PC-3 (cell line): ENCODE measurements at regions of chr4 and their contacts with region 1.

Region 1: GRCh38 chr4:71270901-71271300 is 67.9 kb upstream of the SLC4A4 start:
- DNase-seq: peak; percentile 73
- ATAC-seq: peak; percentile 91
- H3K4me3 ChIP-seq: no peak overlapping the region
- H3K27ac ChIP-seq: no peak overlapping the region
- H3K4me1 ChIP-seq: no peaks in the 10 kb centered on the region; the same call in 1 of the 2 replicates
- H3K27me3 ChIP-seq: no peaks in the 10 kb centered on the region
- CTCF ChIP-seq: peak; percentile 81

Region 2: GRCh38 chr4:71050809-71051208 is 220.1 kb before region 1 on chr4:
- CTCF ChIA-PET with region 1: no interaction called
- POLR2A ChIA-PET with region 1: no interaction called
- intact Hi-C with region 1: loop called (anchors 5 kb)
- DNase-seq: peak; percentile 43
- ATAC-seq: peak; percentile 64; the same call in 1 of the 2 replicates
- H3K4me3 ChIP-seq: no peak overlapping the region
- H3K27ac ChIP-seq: no peak overlapping the region
- H3K4me1 ChIP-seq: no peaks in the 10 kb centered on the region
- H3K27me3 ChIP-seq: no peaks in the 10 kb centered on the region
- CTCF ChIP-seq: peak; percentile 29; the same call in 1 of the 2 replicates

Region 3: DNA sequence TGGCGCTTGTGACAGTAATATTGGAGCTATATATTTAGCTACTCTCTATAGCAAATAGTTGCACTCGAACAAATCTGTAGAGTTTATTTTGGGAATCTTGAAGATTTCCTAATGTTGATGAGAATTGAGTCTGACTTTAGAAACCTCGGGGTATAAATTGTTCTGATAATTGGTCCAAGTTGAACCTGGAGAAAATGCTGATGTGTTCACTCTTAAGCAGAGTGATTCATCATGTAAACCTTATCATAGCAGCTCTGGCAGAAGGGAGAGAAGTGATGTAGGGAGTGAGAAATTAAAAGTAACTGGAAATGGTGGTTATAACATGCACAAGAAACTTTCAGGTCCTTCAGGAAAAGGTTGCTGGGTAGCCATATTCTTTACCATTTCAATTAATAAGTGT is 51.5 kb after region 1 on chr4:
- CTCF ChIA-PET with region 1: no interaction called
- POLR2A ChIA-PET with region 1: no interaction called
- intact Hi-C with region 1: no loop called
- DNase-seq: no peak
- ATAC-seq: no peak
- H3K4me3 ChIP-seq: no peak overlapping the region
- H3K27ac ChIP-seq: no peak overlapping the region
- H3K4me1 ChIP-seq: no peaks in the 10 kb centered on the region
- H3K27me3 ChIP-seq: no peaks in the 10 kb centered on the region
- CTCF ChIP-seq: no peak

Region 4: DNA sequence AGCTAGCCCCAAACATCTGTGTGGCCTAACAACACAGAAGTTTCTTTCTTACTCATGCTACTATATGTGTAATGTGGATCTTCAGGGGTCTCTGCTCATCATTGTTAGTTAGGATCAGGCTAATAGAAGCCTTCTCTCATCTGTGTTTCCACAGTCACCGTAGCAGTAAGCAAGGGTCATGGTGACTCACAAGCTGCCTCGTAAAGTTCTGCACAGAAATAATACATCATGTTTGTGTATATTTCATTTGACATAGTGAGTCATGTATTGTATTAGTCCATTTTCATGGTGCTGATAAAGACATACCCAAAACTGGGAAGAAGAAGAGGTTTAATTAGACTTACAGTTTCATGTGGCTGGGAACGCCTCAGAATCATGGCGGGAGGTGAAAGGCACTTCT is 106.7 kb after region 1 on chr4:
- CTCF ChIA-PET with region 1: no interaction called
- POLR2A ChIA-PET with region 1: no interaction called
- intact Hi-C with region 1: loop called (anchors 5 kb)
- DNase-seq: peak; percentile 96
- ATAC-seq: peak; percentile 98
- H3K4me3 ChIP-seq: no peak overlapping the region
- H3K27ac ChIP-seq: peak overlapping the region; percentile 39
- H3K4me1 ChIP-seq: peaks cover 21% of the 10 kb centered on the region
- H3K27me3 ChIP-seq: no peaks in the 10 kb centered on the region
- CTCF ChIP-seq: no peak

Region 5: DNA sequence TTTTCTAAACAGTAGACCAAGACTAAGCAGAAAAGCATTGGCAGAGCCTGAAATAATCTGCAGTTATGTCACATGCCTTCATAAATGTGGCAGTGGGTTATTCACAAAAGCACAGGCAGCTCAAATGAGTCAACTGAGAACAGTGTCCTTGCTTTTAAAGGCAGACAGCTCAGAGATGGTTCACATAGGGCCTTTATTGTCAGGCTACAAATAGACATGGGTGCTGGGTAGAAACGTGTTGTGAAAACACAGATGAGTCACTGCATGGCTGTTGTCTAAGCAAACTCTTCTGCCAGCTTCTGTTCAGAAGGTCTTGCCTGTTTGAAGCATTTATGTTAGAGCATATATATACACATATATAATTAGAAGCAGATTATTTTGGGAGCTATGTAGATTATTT is 185.9 kb after region 1 on chr4:
- CTCF ChIA-PET with region 1: no interaction called
- POLR2A ChIA-PET with region 1: no interaction called
- intact Hi-C with region 1: no loop called
- DNase-seq: peak; percentile 92
- ATAC-seq: peak; percentile 100
- H3K4me3 ChIP-seq: no peak overlapping the region
- H3K27ac ChIP-seq: peak overlapping the region; percentile 53
- H3K4me1 ChIP-seq: peaks cover 14% of the 10 kb centered on the region
- H3K27me3 ChIP-seq: no peaks in the 10 kb centered on the region
- CTCF ChIP-seq: no peak

Region 6: GRCh38 chr4:71526626-71527406 is 255.9 kb after region 1 on chr4:
- CTCF ChIA-PET with region 1: no interaction called
- POLR2A ChIA-PET with region 1: no interaction called
- intact Hi-C with region 1: loop called (anchors 10 kb)
- DNase-seq: peak; percentile 33
- ATAC-seq: peak; percentile 62; the same call in 1 of the 2 replicates
- H3K4me3 ChIP-seq: no peak overlapping the region
- H3K27ac ChIP-seq: no peak overlapping the region
- H3K4me1 ChIP-seq: no peaks in the 10 kb centered on the region
- H3K27me3 ChIP-seq: no peaks in the 10 kb centered on the region
- CTCF ChIP-seq: peak; percentile 52; the same call in 1 of the 2 replicates